AG04450 (cell line): ENCODE measurements at regions of chr15 and their contacts with region 1.

Region 1: GRCh38 chr15:78904599-78905358 is 32.1 kb downstream of the MORF4L1 start:
- DNase-seq: no peak
- H3K4me3 ChIP-seq: no peak overlapping the region
- H3K27ac ChIP-seq: no peak overlapping the region
- H3K27me3 ChIP-seq: no peaks in the 10 kb centered on the region
- CTCF ChIP-seq: no peak

Region 2: DNA sequence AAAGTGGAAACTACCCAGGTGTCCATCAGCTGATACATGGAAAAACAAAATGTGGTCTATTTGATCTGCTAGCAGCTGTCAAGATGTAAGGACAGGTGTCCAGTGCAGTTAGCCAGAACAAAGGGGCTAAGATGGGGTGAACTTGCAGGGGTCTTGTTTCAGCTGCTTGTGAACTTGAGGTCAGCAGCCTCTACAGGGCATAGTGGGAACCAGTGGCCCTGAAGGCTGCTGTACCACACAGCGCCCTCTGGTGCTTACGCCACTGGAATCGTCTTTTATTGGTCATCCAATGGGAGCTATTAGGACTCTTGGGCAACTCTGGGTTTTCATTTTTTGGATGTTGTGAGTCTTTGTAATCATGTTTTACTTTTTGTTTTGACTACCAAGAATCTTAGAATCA is 102.3 kb after region 1 on chr15:
- CTCF ChIA-PET with region 1: interaction called, 14 read pairs
- POLR2A ChIA-PET with region 1: no interaction called
- DNase-seq: no peak
- H3K4me3 ChIP-seq: no peak overlapping the region
- H3K27ac ChIP-seq: no peak overlapping the region
- H3K27me3 ChIP-seq: peaks cover 2% of the 10 kb centered on the region
- CTCF ChIP-seq: peak; percentile 58

Region 3: GRCh38 chr15:79028411-79028964 is 123.7 kb after region 1 on chr15:
- CTCF ChIA-PET with region 1: no interaction called
- POLR2A ChIA-PET with region 1: no interaction called
- DNase-seq: no peak
- H3K4me3 ChIP-seq: no peak overlapping the region
- H3K27ac ChIP-seq: no peak overlapping the region
- H3K27me3 ChIP-seq: peaks cover 16% of the 10 kb centered on the region
- CTCF ChIP-seq: peak; percentile 74